ENCODE measurements at regions of chr1 and their contacts with region 1.

Region 1: DNA sequence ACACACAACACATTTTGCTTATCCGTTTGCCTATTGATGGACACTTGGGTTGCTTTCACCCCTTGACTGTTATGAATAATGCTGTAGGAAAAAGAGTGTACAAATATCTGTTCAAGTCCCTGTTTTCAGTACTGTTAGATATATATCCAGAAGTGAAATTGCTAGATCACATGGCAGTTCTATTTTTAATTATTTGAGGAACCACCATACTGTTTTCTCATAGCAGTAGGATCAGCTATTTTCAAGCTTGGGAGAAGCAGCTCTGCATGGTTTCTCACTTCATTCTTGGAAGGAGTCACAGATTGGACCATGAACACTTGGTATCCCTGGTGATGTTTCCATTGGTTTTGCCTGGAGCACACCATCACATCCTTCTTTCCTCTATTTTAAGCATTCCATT is 114.4 kb upstream of the ZP4 start:
- DNase-seq: no peak
- H3K4me3 ChIP-seq: no peak overlapping the region
- H3K27ac ChIP-seq: no peak overlapping the region
- H3K4me1 ChIP-seq: no peaks in the 10 kb centered on the region
- H3K27me3 ChIP-seq: no peaks in the 10 kb centered on the region
- CTCF ChIP-seq: no peak
- EP300 ChIP-seq: no peak
- POLR2A ChIP-seq: no peak

Region 2: GRCh38 chr1:239228451-239228850 is 1223.3 kb after region 1 on chr1:
- intact Hi-C with region 1: loop called in 1 of 4 experiments (anchors 5 kb)
- DNase-seq: no peak
- H3K4me3 ChIP-seq: no peak overlapping the region
- H3K27ac ChIP-seq: no peak overlapping the region
- H3K4me1 ChIP-seq: no peaks in the 10 kb centered on the region
- H3K27me3 ChIP-seq: no peaks in the 10 kb centered on the region
- CTCF ChIP-seq: no peak
- EP300 ChIP-seq: no peak
- POLR2A ChIP-seq: no peak